A549 (cell line): ENCODE measurements at regions of chr12 and their contacts with region 1.

Region 1: GRCh38 chr12:53984901-53985709 is at the start of gene HOXC10:
- DNase-seq: peak; percentile 93 to 97
- ATAC-seq: peak; percentile 74 to 83
- H3K4me3 ChIP-seq: peak within 1 kb of the TSS; percentile 60
- H3K27ac ChIP-seq: peak within 1 kb of the TSS; percentile 88 to 89
- H3K4me1 ChIP-seq: peaks cover 24% of the 10 kb centered on the region
- CTCF ChIP-seq: peak; percentile 84
- EP300 ChIP-seq: no peak
- POLR2A ChIP-seq: no peak
- RAD21 ChIP-seq: peak; percentile 90 to 94
- polyA plus RNA-seq, gene HOXC10: 2.5 and 2.9 TPM in 2 replicates

Region 2: GRCh38 chr12:53770281-53770680 is 214.8 kb before region 1 on chr12:
- CTCF ChIA-PET with region 1: interaction called, 39 read pairs
- POLR2A ChIA-PET with region 1: no interaction called
- DNase-seq: peak; percentile 21 to 66
- ATAC-seq: peak in 1 of 2 experiments; percentile 68; a peak in 3 of 6 replicates
- H3K4me3 ChIP-seq: no peak overlapping the region
- H3K27ac ChIP-seq: peak overlapping the region; percentile 43 to 56; a peak in 4 of 6 replicates
- H3K4me1 ChIP-seq: peaks cover 21% of the 10 kb centered on the region
- CTCF ChIP-seq: no peak
- EP300 ChIP-seq: no peak
- POLR2A ChIP-seq: no peak
- RAD21 ChIP-seq: peak in 1 of 2 experiments; percentile 17; a peak in 2 of 5 replicates

Region 3: GRCh38 chr12:53960187-53961024 is 24.7 kb before region 1 on chr12:
- CTCF ChIA-PET with region 1: interaction called, 10 read pairs
- POLR2A ChIA-PET with region 1: no interaction called
- DNase-seq: no peak
- ATAC-seq: no peak
- H3K4me3 ChIP-seq: no peak overlapping the region
- H3K27ac ChIP-seq: no peak overlapping the region
- H3K4me1 ChIP-seq: peaks cover 9% of the 10 kb centered on the region; the same call in 1 of the 3 replicates
- CTCF ChIP-seq: no peak
- EP300 ChIP-seq: no peak
- POLR2A ChIP-seq: no peak
- RAD21 ChIP-seq: no peak

Region 4: GRCh38 chr12:54005853-54006686 is 21.0 kb after region 1 on chr12:
- CTCF ChIA-PET with region 1: interaction called, 171 read pairs
- POLR2A ChIA-PET with region 1: no interaction called
- DNase-seq: peak; percentile 82 to 86
- ATAC-seq: peak; percentile 59 to 82
- H3K4me3 ChIP-seq: no peak overlapping the region
- H3K27ac ChIP-seq: peak overlapping the region in 1 of 2 experiments; percentile 74; a peak in 3 of 6 replicates
- H3K4me1 ChIP-seq: peaks cover 19% of the 10 kb centered on the region
- CTCF ChIP-seq: peak; percentile 93
- EP300 ChIP-seq: no peak
- POLR2A ChIP-seq: no peak
- RAD21 ChIP-seq: peak; percentile 97 to 98

Region 5: GRCh38 chr12:54201001-54201794 is 216.1 kb after region 1 on chr12:
- CTCF ChIA-PET with region 1: interaction called, 1,074 read pairs
- POLR2A ChIA-PET with region 1: no interaction called
- DNase-seq: peak; percentile 82 to 91
- ATAC-seq: peak; percentile 91 to 95
- H3K4me3 ChIP-seq: no peak overlapping the region
- H3K27ac ChIP-seq: no peak overlapping the region
- H3K4me1 ChIP-seq: peaks cover 5% of the 10 kb centered on the region
- CTCF ChIP-seq: peak; percentile 84
- EP300 ChIP-seq: no peak
- POLR2A ChIP-seq: no peak
- RAD21 ChIP-seq: peak; percentile 76 to 81